G401 (cell line): ENCODE measurements at regions of chr12 and their contacts with region 1.

Region 1: GRCh38 chr12:50661300-50662115 is 102.4 kb upstream of the ATF1 start:
- DNase-seq: no peak

Region 2: DNA sequence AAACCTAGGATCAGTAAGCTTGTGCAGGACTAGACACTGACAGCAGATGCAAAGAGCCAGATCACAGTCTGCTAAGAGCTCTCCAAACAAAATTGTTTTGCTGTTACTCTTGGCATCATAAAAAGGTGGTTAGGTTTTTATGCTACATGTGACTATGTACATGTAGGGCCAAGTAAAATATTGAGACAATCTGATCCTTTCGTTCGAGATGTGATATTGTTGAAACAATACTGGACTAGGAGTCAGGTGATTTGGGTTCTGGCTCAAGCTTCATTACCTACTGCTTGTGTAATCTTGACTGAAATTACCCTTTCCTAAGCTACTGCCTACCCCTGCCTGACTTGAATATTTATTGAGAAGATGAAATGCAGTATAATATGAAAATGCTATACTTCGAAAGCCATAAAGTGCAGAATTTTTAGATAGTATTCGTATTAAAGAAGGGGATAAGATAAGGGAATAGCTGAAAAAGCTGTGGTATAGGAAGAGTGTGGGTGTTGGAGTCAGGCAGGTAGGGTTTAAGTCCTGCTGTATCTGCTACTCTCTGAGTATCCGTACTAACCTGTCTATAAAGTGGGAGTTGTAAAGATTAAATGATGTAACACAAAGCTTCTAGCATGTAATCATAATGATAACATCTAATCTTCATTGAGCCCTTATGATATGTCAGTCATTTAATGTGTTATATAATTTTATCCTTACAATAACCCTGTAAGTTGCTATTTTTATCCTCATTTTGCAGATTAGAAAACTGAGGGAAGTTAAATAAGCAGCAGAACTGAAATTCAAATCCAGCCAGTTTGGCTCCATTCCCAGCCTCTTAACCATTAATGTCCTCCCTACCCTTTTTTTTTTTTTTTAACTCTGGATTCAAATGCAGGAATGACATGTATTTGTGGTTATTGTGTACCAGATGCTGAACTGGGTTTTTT is 63.8 kb after region 1 on chr12:
- in situ Hi-C with region 1: loop called (anchors 5 kb)
- DNase-seq: peak; percentile 70

Region 3: GRCh38 chr12:50763639-50764285 is 102.3 kb after region 1 on chr12 and contains the start of gene ATF1:
- in situ Hi-C with region 1: no loop called
- DNase-seq: peak; percentile 87
- total RNA-seq, gene ATF1: 31.8 and 48.3 TPM in 2 replicates

Region 4: DNA sequence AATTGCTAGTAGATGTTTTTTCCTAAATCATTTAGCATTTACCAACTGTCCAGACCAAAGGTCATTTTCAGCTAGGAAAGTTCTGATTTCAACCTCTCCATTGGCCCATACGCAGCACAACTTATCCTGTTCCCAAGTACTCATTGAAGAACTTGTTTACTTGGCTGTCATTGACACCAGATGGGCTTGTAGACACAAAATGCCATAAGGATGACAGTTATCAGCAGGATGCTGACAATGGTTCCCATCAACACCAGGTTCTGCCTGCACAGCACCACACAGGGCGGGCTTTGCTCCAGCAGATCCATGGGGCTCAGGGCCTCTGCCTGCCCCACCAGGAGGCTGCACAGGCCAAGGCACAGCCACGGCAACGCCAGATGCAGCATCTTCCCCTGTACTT is 144.7 kb after region 1 on chr12:
- in situ Hi-C with region 1: no loop called
- DNase-seq: peak; percentile 90

Region 5: GRCh38 chr12:50842637-50843493 is 181.4 kb after region 1 on chr12 and contains the start of gene TMPRSS12:
- in situ Hi-C with region 1: no loop called
- DNase-seq: no peak
- total RNA-seq, gene TMPRSS12: not detected in 2 replicates